HCT116 (cell line): ENCODE measurements at regions of chr9 and their contacts with region 1.

Region 1: DNA sequence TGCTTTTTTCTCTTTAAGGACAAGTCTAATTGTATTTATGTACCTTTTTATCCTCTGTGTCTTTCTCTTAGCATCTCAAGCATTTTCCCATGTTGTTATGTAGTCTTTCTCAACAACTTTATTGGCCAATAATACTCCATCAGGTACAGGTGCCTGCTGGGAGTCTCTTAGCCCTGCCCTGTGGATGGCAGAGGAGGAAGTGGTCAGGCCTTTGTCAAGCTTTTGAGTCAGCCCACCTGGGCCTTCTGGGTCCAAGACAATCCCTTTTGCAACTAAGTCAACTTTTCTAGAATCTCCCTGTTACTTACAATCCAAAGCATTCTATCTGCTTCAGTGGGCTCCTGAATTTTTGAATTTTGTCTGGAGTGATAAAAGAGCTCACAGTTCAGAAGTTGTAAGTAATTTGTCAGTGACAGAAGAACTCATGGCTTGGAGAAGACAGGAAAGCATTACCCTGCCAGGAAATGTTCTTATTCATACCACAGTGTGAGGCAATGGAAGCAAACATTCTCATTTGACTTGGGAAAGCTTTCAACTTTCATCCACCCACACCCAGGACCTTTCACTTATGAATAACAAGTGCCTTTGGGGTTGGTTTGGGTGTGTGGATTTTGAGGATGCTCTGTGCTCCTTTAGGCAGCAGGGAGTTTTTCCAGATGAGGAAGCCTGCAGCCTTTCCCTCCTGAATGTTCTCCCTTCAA is 200.0 kb upstream of the S1PR3 start:
- DNase-seq: no peak
- ATAC-seq: no peak
- H3K4me3 ChIP-seq: no peak overlapping the region
- H3K27ac ChIP-seq: no peak overlapping the region
- H3K4me1 ChIP-seq: no peaks in the 10 kb centered on the region
- H3K27me3 ChIP-seq: no peaks in the 10 kb centered on the region
- CTCF ChIP-seq: no peak
- POLR2A ChIP-seq: no peak
- RAD21 ChIP-seq: no peak

Region 2: GRCh38 chr9:89902450-89903145 is 1111.3 kb after region 1 on chr9:
- CTCF ChIA-PET with region 1: no interaction called
- POLR2A ChIA-PET with region 1: no interaction called
- RAD21 ChIA-PET with region 1: no interaction called
- intact Hi-C with region 1: loop called (anchors 10 kb)
- DNase-seq: no peak
- ATAC-seq: no peak
- H3K4me3 ChIP-seq: no peak overlapping the region
- H3K27ac ChIP-seq: no peak overlapping the region
- H3K4me1 ChIP-seq: no peaks in the 10 kb centered on the region
- H3K27me3 ChIP-seq: peaks cover 36% of the 10 kb centered on the region
- CTCF ChIP-seq: no peak
- POLR2A ChIP-seq: no peak
- RAD21 ChIP-seq: no peak